HCT116 (cell line): ENCODE measurements at regions of chr5 and their contacts with region 1.

Region 1: DNA sequence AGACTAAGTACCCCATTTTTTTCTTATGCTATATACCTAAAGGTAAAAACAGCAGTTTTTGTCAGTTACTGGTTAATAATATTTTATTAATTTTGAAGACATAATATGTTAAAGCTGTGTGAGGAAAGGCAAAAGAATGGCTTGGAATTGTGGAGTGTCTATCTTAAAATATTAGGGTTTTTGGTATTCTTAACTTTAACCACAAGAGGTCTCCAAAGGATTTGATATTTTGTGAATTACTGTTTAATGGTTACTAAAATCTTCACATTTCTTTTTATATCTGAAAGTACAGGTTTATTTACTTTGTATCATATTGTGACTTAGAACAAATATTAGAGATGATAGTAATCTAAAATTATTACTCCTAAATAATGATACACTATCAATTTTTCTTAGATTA is 32.0 kb upstream of the DHFR start:
- DNase-seq: peak; percentile 2
- ATAC-seq: no peak
- H3K4me3 ChIP-seq: no peak overlapping the region
- H3K27ac ChIP-seq: no peak overlapping the region
- H3K4me1 ChIP-seq: no peaks in the 10 kb centered on the region
- H3K27me3 ChIP-seq: no peaks in the 10 kb centered on the region
- CTCF ChIP-seq: peak; percentile 8 to 45 (median 31); a peak in 2 of 6 replicates
- POLR2A ChIP-seq: no peak
- RAD21 ChIP-seq: peak; percentile 54

Region 2: GRCh38 chr5:80541392-80541791 is 145.4 kb before region 1 on chr5:
- CTCF ChIA-PET with region 1: no interaction called
- POLR2A ChIA-PET with region 1: no interaction called
- RAD21 ChIA-PET with region 1: no interaction called
- intact Hi-C with region 1: no loop called
- DNase-seq: no peak
- ATAC-seq: no peak
- H3K4me3 ChIP-seq: no peak overlapping the region
- H3K27ac ChIP-seq: no peak overlapping the region
- H3K4me1 ChIP-seq: no peaks in the 10 kb centered on the region
- H3K27me3 ChIP-seq: no peaks in the 10 kb centered on the region
- CTCF ChIP-seq: no peak
- POLR2A ChIP-seq: no peak
- RAD21 ChIP-seq: no peak

Region 3: DNA sequence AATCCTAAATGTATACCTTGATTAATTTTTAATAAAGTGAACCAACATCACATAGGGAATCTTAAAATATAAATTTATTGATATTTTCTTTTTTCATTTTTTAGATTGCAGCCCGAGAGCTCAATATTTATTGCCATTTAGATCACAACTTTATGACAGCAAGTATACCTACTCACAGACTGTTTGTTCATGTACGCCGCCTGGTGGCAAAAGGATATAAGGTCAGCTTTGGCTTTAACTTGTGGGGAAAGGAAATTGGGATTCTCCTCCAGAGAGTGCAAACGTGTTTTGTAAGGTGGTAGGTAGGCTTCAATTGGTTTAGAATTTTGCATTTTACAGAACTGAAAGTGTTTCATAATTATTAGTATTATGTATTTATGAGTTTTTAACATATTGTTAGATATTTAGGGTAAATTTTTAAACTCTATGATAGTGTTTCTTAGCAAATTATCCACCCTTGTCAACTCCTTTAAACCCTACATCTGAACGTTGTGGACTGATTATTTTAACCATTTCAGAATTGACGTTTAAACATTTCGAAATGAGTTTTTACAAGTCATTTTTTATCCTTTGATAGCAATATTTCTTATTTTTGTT is 14.5 kb before region 1 on chr5:
- CTCF ChIA-PET with region 1: interaction called, 10 read pairs
- POLR2A ChIA-PET with region 1: no interaction called
- RAD21 ChIA-PET with region 1: no interaction called
- intact Hi-C with region 1: no loop called
- DNase-seq: peak; percentile 54
- ATAC-seq: peak; percentile 90
- H3K4me3 ChIP-seq: no peak overlapping the region
- H3K27ac ChIP-seq: no peak overlapping the region
- H3K4me1 ChIP-seq: no peaks in the 10 kb centered on the region
- H3K27me3 ChIP-seq: no peaks in the 10 kb centered on the region
- CTCF ChIP-seq: peak; percentile 74 to 77 (median 76); a peak in 5 of 6 replicates
- POLR2A ChIP-seq: no peak
- RAD21 ChIP-seq: peak; percentile 80

Region 4: GRCh38 chr5:81105261-81105877 is 418.6 kb after region 1 on chr5:
- CTCF ChIA-PET with region 1: interaction called, 15 read pairs
- POLR2A ChIA-PET with region 1: no interaction called
- RAD21 ChIA-PET with region 1: interaction called in 1 of 2 experiments, 3 read pairs
- intact Hi-C with region 1: loop called (anchors 2 kb)
- DNase-seq: no peak
- ATAC-seq: no peak
- H3K4me3 ChIP-seq: no peak overlapping the region
- H3K27ac ChIP-seq: no peak overlapping the region
- H3K4me1 ChIP-seq: no peaks in the 10 kb centered on the region
- H3K27me3 ChIP-seq: no peaks in the 10 kb centered on the region
- CTCF ChIP-seq: no peak
- POLR2A ChIP-seq: no peak
- RAD21 ChIP-seq: no peak

Region 5: GRCh38 chr5:81165493-81166119 is 478.8 kb after region 1 on chr5:
- CTCF ChIA-PET with region 1: interaction called, 12 read pairs
- POLR2A ChIA-PET with region 1: no interaction called
- RAD21 ChIA-PET with region 1: no interaction called
- intact Hi-C with region 1: loop called (anchors 2 kb)
- DNase-seq: peak; percentile 52
- ATAC-seq: peak; percentile 100
- H3K4me3 ChIP-seq: no peak overlapping the region
- H3K27ac ChIP-seq: no peak overlapping the region
- H3K4me1 ChIP-seq: no peaks in the 10 kb centered on the region
- H3K27me3 ChIP-seq: no peaks in the 10 kb centered on the region
- CTCF ChIP-seq: peak; percentile 71 to 93 (median 92)
- POLR2A ChIP-seq: no peak
- RAD21 ChIP-seq: peak; percentile 85

Region 6: GRCh38 chr5:81194633-81195333 is 508.0 kb after region 1 on chr5:
- CTCF ChIA-PET with region 1: interaction called, 8 read pairs
- POLR2A ChIA-PET with region 1: no interaction called
- RAD21 ChIA-PET with region 1: no interaction called
- intact Hi-C with region 1: loop called (anchors 1 kb)
- DNase-seq: peak; percentile 68
- ATAC-seq: peak; percentile 99
- H3K4me3 ChIP-seq: no peak overlapping the region
- H3K27ac ChIP-seq: no peak overlapping the region
- H3K4me1 ChIP-seq: peaks cover 0 to 6% of the 10 kb centered on the region in 2 experiments; a peak in 1 of 4 replicates
- H3K27me3 ChIP-seq: no peaks in the 10 kb centered on the region
- CTCF ChIP-seq: peak; percentile 80 to 95 (median 94)
- POLR2A ChIP-seq: no peak
- RAD21 ChIP-seq: peak; percentile 94

Region 7: GRCh38 chr5:81233080-81233634 is 546.4 kb after region 1 on chr5 and contains the start of gene CKMT2:
- CTCF ChIA-PET with region 1: no interaction called
- POLR2A ChIA-PET with region 1: no interaction called
- RAD21 ChIA-PET with region 1: no interaction called
- intact Hi-C with region 1: no loop called
- DNase-seq: no peak
- ATAC-seq: no peak
- H3K4me3 ChIP-seq: no peak within 1 kb of the TSS
- H3K27ac ChIP-seq: no peak within 1 kb of the TSS
- H3K4me1 ChIP-seq: no peaks in the 10 kb centered on the region
- H3K27me3 ChIP-seq: no peaks in the 10 kb centered on the region
- CTCF ChIP-seq: no peak
- POLR2A ChIP-seq: no peak
- RAD21 ChIP-seq: no peak
- total RNA-seq, gene CKMT2: not detected

Region 8: DNA sequence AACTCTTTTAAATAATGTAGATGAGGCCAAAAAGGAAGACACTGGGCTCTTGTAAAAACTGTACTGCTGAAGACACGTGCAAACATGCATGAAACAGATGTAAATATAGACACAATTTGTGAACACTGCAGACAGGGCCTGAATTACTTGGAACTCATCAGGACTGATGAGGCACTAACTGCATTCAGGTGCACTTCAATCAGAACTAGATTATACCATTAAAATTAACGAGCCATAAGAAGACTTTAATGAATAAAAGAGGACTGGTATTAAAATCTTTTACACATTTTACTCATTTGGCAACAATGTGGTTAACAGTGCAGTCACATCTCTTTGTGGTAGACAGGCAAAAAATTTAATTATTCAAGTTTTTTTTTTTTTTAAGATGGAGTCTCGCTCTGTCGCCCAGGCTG is 601.3 kb after region 1 on chr5:
- CTCF ChIA-PET with region 1: no interaction called
- POLR2A ChIA-PET with region 1: no interaction called
- RAD21 ChIA-PET with region 1: no interaction called
- intact Hi-C with region 1: no loop called
- DNase-seq: no peak
- ATAC-seq: no peak
- H3K4me3 ChIP-seq: no peak overlapping the region
- H3K27ac ChIP-seq: no peak overlapping the region
- H3K4me1 ChIP-seq: no peaks in the 10 kb centered on the region
- H3K27me3 ChIP-seq: no peaks in the 10 kb centered on the region
- CTCF ChIP-seq: no peak
- POLR2A ChIP-seq: no peak
- RAD21 ChIP-seq: no peak

Region 9: DNA sequence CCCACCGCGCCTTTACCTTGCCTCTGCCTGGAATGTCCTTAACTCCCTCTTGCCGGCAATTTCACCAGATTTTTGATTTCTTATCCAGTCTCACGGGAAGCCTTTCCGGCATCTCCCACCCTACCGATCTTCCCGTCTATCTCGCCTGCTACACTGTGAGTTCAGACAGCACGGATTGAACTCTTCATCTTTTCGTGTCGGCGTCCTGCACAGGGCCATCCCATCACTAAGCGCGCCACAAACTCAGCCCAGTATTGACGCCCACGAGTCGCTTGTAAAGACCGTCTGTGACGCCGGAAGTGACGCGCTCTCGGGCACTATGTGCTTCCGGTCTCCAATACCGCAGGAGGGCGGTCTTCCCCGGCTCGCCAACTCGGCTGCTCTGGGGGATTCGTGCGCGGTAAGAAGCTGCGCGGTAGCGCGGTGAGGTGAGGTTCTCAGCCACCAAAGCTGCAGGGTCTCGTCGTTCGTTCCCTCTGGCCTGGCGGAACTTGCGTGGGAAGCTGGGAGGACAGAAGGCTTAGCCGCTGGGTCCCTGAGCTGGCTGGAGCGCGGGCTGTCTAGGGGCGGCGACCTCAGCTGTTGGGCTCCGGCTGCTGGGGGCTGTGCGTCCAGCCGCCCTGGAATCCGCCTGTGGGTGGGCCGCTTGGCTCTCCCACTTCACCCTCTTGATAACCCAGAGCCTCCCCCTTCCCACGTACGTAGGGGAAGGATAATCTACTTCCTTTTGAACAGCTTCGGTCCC is 614.7 kb after region 1 on chr5 and contains the start of gene ZCCHC9:
- CTCF ChIA-PET with region 1: no interaction called
- POLR2A ChIA-PET with region 1: no interaction called
- RAD21 ChIA-PET with region 1: no interaction called
- intact Hi-C with region 1: loop called (anchors 2 kb)
- DNase-seq: peak; percentile 90
- ATAC-seq: peak; percentile 89
- H3K4me3 ChIP-seq: peak within 1 kb of the TSS; percentile 82 to 90
- H3K27ac ChIP-seq: peak within 1 kb of the TSS; percentile 77
- H3K4me1 ChIP-seq: peaks cover 7 to 22% of the 10 kb centered on the region in 2 experiments; a peak in 2 of 4 replicates
- H3K27me3 ChIP-seq: no peaks in the 10 kb centered on the region
- CTCF ChIP-seq: no peak
- POLR2A ChIP-seq: peak; percentile 96
- RAD21 ChIP-seq: no peak
- total RNA-seq, gene ZCCHC9: 33.7 TPM